ENCODE measurements at regions of chr12 and their contacts with region 1.

Region 1: DNA sequence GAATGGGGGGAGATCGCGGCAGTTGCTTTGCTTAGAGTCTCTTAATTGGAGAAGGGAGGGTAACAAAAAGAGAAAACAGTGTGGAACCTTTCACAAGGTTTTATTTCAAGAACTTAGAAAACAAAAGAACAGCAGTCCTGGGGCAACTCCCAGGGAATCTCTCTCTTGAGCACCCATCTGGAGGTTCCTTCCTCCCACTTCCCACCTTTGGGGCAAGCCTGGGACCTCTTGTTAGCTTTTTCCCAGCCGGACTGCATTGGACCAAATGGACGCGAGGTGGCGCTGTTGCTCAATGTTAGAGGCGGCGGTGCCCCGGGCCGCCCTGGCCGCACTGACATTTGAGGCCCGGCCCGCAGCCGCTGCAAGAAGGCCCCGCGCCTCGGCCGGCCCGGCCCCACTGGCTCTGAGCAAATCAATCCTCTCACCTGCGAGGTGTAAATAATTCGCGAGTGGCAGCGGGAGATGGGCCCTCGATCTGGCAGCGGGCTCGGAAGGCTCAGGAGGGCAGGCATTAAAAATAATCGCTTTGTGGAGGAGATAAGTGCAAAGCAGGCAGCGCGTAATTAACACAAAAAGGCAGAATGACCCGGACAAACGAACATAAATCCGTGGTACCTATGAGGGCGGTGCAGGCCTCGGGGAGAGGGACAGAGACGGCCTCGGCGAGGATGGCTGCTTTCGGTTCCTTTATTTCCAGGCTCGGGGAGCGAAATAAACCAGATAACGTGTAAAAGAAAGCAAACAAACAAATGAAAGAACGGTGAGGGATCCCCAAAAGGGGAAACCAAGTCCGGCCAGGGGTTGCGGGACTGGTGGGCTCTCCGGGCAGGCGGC is 2.7 kb upstream of the HOXC8 start:
- DNase-seq: no peak
- H3K4me3 ChIP-seq: peak overlapping the region; percentile 96
- CTCF ChIP-seq: peak; percentile 90

Region 2: GRCh38 chr12:53995378-53996239 is 10.5 kb before region 1 on chr12:
- CTCF ChIA-PET with region 1: interaction called, 88 read pairs
- POLR2A ChIA-PET with region 1: interaction called, 22 read pairs
- DNase-seq: no peak
- H3K4me3 ChIP-seq: peak overlapping the region; percentile 96
- CTCF ChIP-seq: no peak

Region 3: GRCh38 chr12:54024127-54024526 is 18.1 kb after region 1 on chr12:
- CTCF ChIA-PET with region 1: interaction called, 385 read pairs
- POLR2A ChIA-PET with region 1: interaction called, 23 read pairs
- DNase-seq: no peak
- H3K4me3 ChIP-seq: peak overlapping the region; percentile 55
- CTCF ChIP-seq: no peak

Region 4: DNA sequence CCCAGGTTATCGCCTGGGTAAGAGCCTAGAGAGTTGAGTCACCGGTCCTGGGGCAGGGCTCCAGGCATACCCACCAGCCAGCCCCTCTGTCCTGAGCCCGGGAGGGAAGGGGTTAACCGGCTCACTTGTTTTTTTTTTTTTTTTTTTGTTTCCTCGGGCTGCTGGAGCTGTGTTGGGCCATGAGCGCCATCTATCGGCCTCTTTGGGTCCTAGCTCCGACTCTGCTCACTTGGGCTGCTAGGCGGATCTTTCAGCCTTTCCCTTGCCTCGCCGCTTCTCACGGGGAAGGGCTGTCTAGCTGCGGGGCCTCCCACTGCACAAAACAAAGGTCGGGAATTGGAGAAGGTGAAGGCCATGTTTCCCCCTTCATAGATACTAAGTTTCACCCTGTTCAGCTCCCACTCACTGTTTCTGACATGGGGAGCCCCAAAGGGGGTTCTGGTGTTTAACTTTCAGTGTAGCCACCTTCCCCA is 185.5 kb after region 1 on chr12:
- CTCF ChIA-PET with region 1: interaction called, 241 read pairs
- POLR2A ChIA-PET with region 1: interaction called, 10 read pairs
- DNase-seq: no peak
- H3K4me3 ChIP-seq: no peak overlapping the region
- CTCF ChIP-seq: peak; percentile 81

Measured in AG04449 (cell line).